Sigmoid colon (tissue), 7 donors: ENCODE measurements at regions of chr10 and their contacts with region 1.

Region 1: GRCh38 chr10:102172288-102172687 is 20.1 kb downstream of the NOLC1 start:
- DNase-seq: no peak
- H3K4me3 ChIP-seq: no peak overlapping the region
- H3K27ac ChIP-seq: no peak overlapping the region
- H3K4me1 ChIP-seq: peaks cover 0 to 6% (median 3%) of the 10 kb centered on the region in 4 donors
- H3K27me3 ChIP-seq: peaks cover 0 to 8% (median 0%) of the 10 kb centered on the region in 3 donors
- CTCF ChIP-seq: no peak
- EP300 ChIP-seq: no peak
- POLR2A ChIP-seq: no peak

Region 2: GRCh38 chr10:102064868-102065560 is 107.3 kb before region 1 on chr10 and contains the start of gene HPS6:
- intact Hi-C with region 1: no loop called
- DNase-seq: peak; percentile 95
- H3K4me3 ChIP-seq: peak within 1 kb of the TSS; percentile 61 to 87 (median 84)
- H3K27ac ChIP-seq: peak within 1 kb of the TSS; percentile 90 to 94 (median 93)
- H3K4me1 ChIP-seq: peaks cover 0 to 44% (median 33%) of the 10 kb centered on the region in 4 donors
- H3K27me3 ChIP-seq: no peaks in the 10 kb centered on the region
- CTCF ChIP-seq: no peak
- EP300 ChIP-seq: no peak
- POLR2A ChIP-seq: peak; percentile 48 to 50
- total RNA-seq, gene HPS6: 12.5 to 18.9 (median 17.2) TPM

Region 3: GRCh38 chr10:102352066-102352715 is 179.9 kb after region 1 on chr10:
- intact Hi-C with region 1: loop called (anchors 5 kb)
- DNase-seq: peak; percentile 70
- H3K4me3 ChIP-seq: no peak overlapping the region
- H3K27ac ChIP-seq: no peak overlapping the region
- H3K4me1 ChIP-seq: no peaks in the 10 kb centered on the region
- H3K27me3 ChIP-seq: no peaks in the 10 kb centered on the region
- CTCF ChIP-seq: peak; percentile 57 to 87 (median 82)
- EP300 ChIP-seq: no peak
- POLR2A ChIP-seq: no peak